HepG2 (cell line): ENCODE measurements at regions of chr10 and their contacts with region 1.

Region 1: GRCh38 chr10:4918236-4918635 is 45.0 kb upstream of the AKR1C1 start:
- DNase-seq: no peak
- ATAC-seq: no peak
- H3K4me3 ChIP-seq: no peak overlapping the region
- H3K27ac ChIP-seq: no peak overlapping the region
- H3K4me1 ChIP-seq: no peaks in the 10 kb centered on the region
- H3K27me3 ChIP-seq: no peaks in the 10 kb centered on the region
- CTCF ChIP-seq: no peak
- EP300 ChIP-seq: no peak
- POLR2A ChIP-seq: no peak
- RAD21 ChIP-seq: no peak

Region 2: DNA sequence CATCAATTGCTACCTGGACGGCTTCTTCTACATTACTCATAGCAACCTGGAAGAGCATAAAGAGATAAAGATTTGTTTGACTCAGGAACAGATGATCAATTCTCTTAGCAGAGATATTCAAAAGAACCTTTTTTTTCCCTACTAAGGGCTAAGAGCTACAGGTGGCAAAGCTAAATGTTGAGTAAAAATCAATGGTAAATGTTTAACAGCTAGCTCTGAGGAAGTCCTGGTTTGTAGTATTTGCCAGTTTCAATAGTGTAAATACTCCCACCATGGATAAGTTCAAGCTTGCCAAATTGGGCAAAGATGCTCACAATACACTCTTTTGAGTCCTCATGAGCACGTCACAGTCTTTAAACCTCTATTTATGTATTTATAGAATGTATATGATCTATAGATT is 28.3 kb before region 1 on chr10:
- CTCF ChIA-PET with region 1: no interaction called
- POLR2A ChIA-PET with region 1: no interaction called
- in situ Hi-C with region 1: no loop called
- intact Hi-C with region 1: loop called (anchors 1 kb)
- DNase-seq: peak; percentile 77
- ATAC-seq: peak; percentile 98
- H3K4me3 ChIP-seq: no peak overlapping the region
- H3K27ac ChIP-seq: peak overlapping the region; percentile 13
- H3K4me1 ChIP-seq: peaks cover 27% of the 10 kb centered on the region
- H3K27me3 ChIP-seq: no peaks in the 10 kb centered on the region
- CTCF ChIP-seq: no peak
- EP300 ChIP-seq: peak in 1 of 2 experiments; percentile 56; a peak in 2 of 4 replicates
- POLR2A ChIP-seq: no peak
- RAD21 ChIP-seq: no peak